Activated CD4-positive, alpha-beta T cell treated with anti-CD3 and anti-CD28 coated beads for 36 hours (primary cell): ENCODE measurements at regions of chr15 and their contacts with region 1.

Region 1: DNA sequence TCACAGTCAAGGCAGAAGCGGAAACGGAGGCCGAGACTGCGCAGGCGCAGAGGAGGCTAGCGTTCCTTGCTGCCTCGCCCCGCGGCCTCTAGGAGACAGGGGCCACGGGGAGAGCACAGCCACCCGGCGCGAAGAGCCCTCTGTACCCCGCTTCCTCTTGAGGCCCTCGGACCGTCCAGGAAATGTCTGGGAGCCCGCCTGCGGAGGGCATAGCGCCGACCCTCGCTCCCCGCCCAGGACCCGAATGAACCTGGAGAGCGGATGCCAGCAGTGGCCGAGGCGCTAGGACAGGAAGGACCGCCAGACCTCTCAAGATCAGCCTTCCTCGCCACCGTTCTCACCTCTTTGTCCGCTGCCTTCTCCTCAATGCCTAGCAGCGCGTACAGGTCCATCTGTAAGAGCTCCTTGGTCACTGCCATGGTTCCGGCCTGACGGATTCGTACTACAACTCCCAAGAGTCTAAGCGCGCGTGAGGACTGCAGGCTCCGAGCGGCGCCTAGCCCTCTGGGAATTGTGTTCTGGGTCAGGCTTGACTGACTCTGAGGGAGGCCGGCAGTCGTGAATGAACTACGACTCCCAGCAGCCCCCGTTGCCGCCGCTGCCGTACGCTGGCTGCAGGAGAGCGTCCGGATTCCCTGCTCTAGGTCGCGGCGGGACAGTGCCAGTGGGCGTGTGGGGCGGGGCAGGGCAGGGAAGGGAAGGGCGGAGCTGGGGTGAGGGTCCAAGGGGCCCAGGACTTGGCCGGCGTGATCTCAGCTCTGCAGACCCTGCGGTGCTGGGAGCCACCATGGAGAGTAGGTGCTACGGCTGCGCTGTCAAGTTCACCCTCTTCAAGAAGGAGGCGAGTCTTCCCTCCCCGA is at the starts of genes DNAJC17 and ZFYVE19:
- DNase-seq: peak; percentile 97
- ATAC-seq: peak; percentile 98
- H3K4me3 Mint-ChIP-seq: peak within 1 kb of the TSS; percentile 91
- H3K27ac Mint-ChIP-seq: peak within 1 kb of the TSS; percentile 96
- H3K4me1 Mint-ChIP-seq: peaks cover 19% of the 10 kb centered on the region
- H3K27me3 Mint-ChIP-seq: no peaks in the 10 kb centered on the region
- total RNA-seq, gene DNAJC17: 41.5 to 43.6 TPM
- total RNA-seq, gene ZFYVE19: 27.5 to 33.7 TPM

Region 2: GRCh38 chr15:40160689-40161688 is 646.3 kb before region 1 on chr15 and contains the start of gene BUB1B:
- CTCF ChIA-PET with region 1: no interaction called
- POLR2A ChIA-PET with region 1: no interaction called
- intact Hi-C with region 1: loop called in 1 of 2 experiments (anchors 1 kb)
- DNase-seq: peak; percentile 96
- ATAC-seq: peak; percentile 95
- H3K4me3 Mint-ChIP-seq: no peak within 1 kb of the TSS
- H3K27ac Mint-ChIP-seq: no peak within 1 kb of the TSS
- H3K4me1 Mint-ChIP-seq: peaks cover 8% of the 10 kb centered on the region
- H3K27me3 Mint-ChIP-seq: no peaks in the 10 kb centered on the region
- total RNA-seq, gene BUB1B: 95.3 to 99.5 TPM

Region 3: DNA sequence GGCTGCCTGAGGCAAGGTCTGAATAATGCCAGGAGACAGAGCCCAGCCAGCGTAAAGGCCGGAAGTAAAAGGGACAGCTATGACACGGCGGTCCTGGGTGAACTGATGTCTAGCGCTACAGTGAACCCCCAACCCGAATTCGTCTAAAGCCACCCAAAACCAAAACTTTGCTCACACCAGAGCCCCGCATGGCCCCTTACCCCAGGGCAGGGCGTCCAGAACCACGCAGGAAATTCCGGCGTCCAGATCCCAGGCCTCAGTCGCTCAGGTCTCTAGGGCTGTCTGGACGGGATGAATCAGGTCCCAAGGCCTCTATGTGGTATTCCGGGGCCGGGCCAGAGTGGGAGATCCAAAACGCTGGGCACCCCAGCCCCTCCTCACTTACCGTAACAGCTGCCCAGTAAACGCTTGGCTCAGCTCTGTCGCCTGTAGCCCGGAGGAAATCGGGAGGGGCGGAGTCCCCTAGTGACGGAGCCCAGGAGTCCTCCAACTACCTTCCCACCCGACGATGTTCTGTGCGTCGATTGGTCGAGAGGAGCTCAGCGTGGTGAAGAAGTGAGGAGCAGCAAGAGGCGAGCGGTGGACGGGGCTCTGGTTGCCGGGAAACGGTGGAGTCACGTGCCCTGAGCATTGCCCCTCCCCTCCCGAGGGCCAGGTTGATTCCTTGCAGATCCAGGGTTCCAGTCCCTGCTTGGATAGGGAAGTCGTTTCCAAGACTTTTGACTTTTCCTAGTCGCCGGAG is 242.5 kb before region 1 on chr15 and contains the start of gene CCDC32:
- CTCF ChIA-PET with region 1: no interaction called
- POLR2A ChIA-PET with region 1: interaction called, 4 read pairs
- intact Hi-C with region 1: loop called in 1 of 2 experiments (anchors 1 kb)
- DNase-seq: peak; percentile 97
- ATAC-seq: peak; percentile 97
- H3K4me3 Mint-ChIP-seq: peak within 1 kb of the TSS; percentile 96
- H3K27ac Mint-ChIP-seq: peak within 1 kb of the TSS; percentile 93
- H3K4me1 Mint-ChIP-seq: peaks cover 44% of the 10 kb centered on the region
- H3K27me3 Mint-ChIP-seq: no peaks in the 10 kb centered on the region
- total RNA-seq, gene CCDC32: 14.2 to 24.5 TPM

Region 4: DNA sequence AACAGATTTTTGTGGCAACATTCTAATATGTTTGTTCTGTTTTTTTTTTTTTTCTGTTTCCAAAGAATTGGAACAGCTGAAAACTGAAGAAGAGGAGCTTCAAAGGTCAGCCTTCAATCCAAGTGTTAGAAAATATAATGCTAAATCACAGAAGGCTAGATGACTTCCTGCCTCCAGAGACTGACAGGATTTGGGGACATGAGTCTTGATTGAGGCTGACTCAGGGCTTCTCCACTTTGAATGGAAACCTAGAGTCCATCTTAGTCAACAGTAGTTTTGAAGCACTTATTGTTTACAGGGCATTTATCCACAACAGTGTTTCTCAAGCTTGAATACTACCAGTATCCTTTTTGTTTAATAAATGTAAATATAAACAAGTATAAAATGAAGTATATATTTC is 156.8 kb before region 1 on chr15:
- CTCF ChIA-PET with region 1: no interaction called
- POLR2A ChIA-PET with region 1: no interaction called
- intact Hi-C with region 1: no loop called
- DNase-seq: no peak
- ATAC-seq: no peak
- H3K4me3 Mint-ChIP-seq: no peak overlapping the region
- H3K27ac Mint-ChIP-seq: no peak overlapping the region
- H3K4me1 Mint-ChIP-seq: peaks cover 4% of the 10 kb centered on the region
- H3K27me3 Mint-ChIP-seq: no peaks in the 10 kb centered on the region

Region 5: GRCh38 chr15:40694688-40695468 is 112.4 kb before region 1 on chr15 and contains the start of gene RAD51:
- CTCF ChIA-PET with region 1: no interaction called
- POLR2A ChIA-PET with region 1: no interaction called
- intact Hi-C with region 1: loop called (anchors 1 kb)
- DNase-seq: peak; percentile 96
- ATAC-seq: peak; percentile 93
- H3K4me3 Mint-ChIP-seq: peak within 1 kb of the TSS; percentile 95
- H3K27ac Mint-ChIP-seq: peak within 1 kb of the TSS; percentile 98
- H3K4me1 Mint-ChIP-seq: peaks cover 20% of the 10 kb centered on the region
- H3K27me3 Mint-ChIP-seq: no peaks in the 10 kb centered on the region
- total RNA-seq, gene RAD51: 73.5 to 75.3 TPM

Region 6: DNA sequence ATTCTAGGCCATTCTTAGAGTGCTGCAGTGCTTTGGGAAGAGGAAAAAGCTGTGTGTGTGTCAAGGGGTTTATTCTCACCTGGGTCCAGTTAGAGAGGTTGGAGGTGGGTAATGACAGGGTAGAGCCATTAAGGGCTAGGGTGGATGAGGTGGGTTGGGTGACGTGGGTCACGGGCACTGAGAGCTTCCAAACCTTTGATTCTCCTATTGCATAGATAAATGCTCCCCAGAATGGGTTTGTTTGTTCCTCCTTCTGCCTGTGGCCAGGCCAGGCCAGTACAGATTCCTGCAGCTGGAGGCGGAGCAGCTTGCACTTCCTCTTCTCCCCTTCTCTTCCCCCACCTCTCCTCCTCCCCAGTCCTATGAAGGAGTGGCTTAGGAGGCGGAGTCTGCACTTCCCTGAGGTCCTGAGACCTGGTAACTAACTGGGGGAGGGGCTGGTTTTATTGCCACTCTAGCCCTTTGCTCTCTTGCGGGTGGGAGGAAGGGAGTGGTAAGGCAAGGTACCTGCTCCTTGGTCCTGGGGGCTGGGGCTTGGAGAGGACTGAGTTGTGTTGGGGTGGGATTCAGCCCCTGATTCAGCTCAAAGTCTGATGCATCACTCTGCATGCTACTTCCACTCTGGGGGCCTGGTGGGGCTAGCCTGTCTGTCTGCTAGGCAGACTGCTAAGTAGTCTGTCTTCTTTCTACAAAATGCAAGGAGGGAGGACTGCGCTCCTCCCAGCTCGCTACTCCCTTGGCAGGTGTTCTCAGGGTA is 40.1 kb after region 1 on chr15:
- CTCF ChIA-PET with region 1: no interaction called
- POLR2A ChIA-PET with region 1: no interaction called
- intact Hi-C with region 1: loop called in 1 of 2 experiments (anchors 1 kb)
- DNase-seq: no peak
- ATAC-seq: no peak
- H3K4me3 Mint-ChIP-seq: no peak overlapping the region
- H3K27ac Mint-ChIP-seq: no peak overlapping the region
- H3K4me1 Mint-ChIP-seq: peaks cover 26% of the 10 kb centered on the region
- H3K27me3 Mint-ChIP-seq: peaks cover 6% of the 10 kb centered on the region

Region 7: GRCh38 chr15:41401904-41402267 is 594.6 kb after region 1 on chr15:
- CTCF ChIA-PET with region 1: no interaction called
- POLR2A ChIA-PET with region 1: no interaction called
- intact Hi-C with region 1: loop called in 1 of 2 experiments (anchors 1 kb)
- DNase-seq: no peak
- ATAC-seq: no peak
- H3K4me3 Mint-ChIP-seq: peak overlapping the region; percentile 94
- H3K27ac Mint-ChIP-seq: peak overlapping the region; percentile 92
- H3K4me1 Mint-ChIP-seq: peaks cover 13% of the 10 kb centered on the region
- H3K27me3 Mint-ChIP-seq: no peaks in the 10 kb centered on the region